ENCODE measurements at regions of chr7 and their contacts with region 1.

Region 1: GRCh38 chr7:2921653-2922347 is 77.7 kb upstream of the GNA12 start:
- DNase-seq: peak in 1 of 2 experiments; percentile 80
- H3K4me3 ChIP-seq: no peak overlapping the region
- H3K27ac ChIP-seq: no peak overlapping the region
- H3K4me1 ChIP-seq: no peaks in the 10 kb centered on the region; a peak in 1 of 7 replicates
- H3K27me3 ChIP-seq: no peaks in the 10 kb centered on the region; a peak in 1 of 7 replicates
- CTCF ChIP-seq: peak; percentile 80 to 84 (median 81)
- EP300 ChIP-seq: no peak
- POLR2A ChIP-seq: no peak
- RAD21 ChIP-seq: peak; percentile 59 to 77

Region 2: GRCh38 chr7:2863461-2864066 is 58.2 kb before region 1 on chr7:
- CTCF ChIA-PET with region 1: interaction called, 29 read pairs
- POLR2A ChIA-PET with region 1: interaction called, 4 read pairs
- DNase-seq: no peak
- H3K4me3 ChIP-seq: no peak overlapping the region
- H3K27ac ChIP-seq: 0 out of 2 replicates have a peak overlapping the region, but pooled peaks have one; percentile 2
- H3K4me1 ChIP-seq: peaks cover 0 to 9% (median 3%) of the 10 kb centered on the region in 4 experiments; a peak in 5 of 7 replicates
- H3K27me3 ChIP-seq: no peaks in the 10 kb centered on the region; a peak in 1 of 7 replicates
- CTCF ChIP-seq: no peak
- EP300 ChIP-seq: no peak
- POLR2A ChIP-seq: no peak
- RAD21 ChIP-seq: no peak

Region 3: DNA sequence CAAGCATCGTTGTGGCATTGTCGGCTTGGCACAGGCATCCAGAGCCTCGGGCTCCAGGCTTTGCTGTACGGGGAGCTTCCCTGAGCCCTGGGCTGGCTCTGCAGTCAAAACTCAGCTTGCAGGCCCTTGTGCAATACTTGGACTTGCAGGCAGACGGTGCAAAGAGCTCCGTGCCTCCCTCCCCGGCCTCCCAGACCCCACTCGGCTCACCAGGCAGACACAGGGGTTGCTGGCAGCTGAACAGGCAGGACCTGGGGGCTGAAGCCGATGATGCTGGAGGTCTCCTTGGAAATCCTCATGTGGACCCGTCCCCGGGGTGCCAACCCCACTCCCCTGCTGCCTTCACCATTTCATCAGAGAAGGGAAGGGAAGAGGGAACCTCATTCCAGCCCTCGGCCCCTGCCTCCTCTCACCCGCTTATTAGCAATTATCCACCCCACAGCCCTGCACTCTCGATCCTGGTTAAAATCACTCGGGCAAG is 18.1 kb before region 1 on chr7:
- CTCF ChIA-PET with region 1: interaction called, 29 read pairs
- POLR2A ChIA-PET with region 1: no interaction called
- DNase-seq: no peak
- H3K4me3 ChIP-seq: no peak overlapping the region
- H3K27ac ChIP-seq: no peak overlapping the region
- H3K4me1 ChIP-seq: no peaks in the 10 kb centered on the region
- H3K27me3 ChIP-seq: no peaks in the 10 kb centered on the region
- CTCF ChIP-seq: no peak
- EP300 ChIP-seq: no peak
- POLR2A ChIP-seq: no peak
- RAD21 ChIP-seq: no peak

Region 4: DNA sequence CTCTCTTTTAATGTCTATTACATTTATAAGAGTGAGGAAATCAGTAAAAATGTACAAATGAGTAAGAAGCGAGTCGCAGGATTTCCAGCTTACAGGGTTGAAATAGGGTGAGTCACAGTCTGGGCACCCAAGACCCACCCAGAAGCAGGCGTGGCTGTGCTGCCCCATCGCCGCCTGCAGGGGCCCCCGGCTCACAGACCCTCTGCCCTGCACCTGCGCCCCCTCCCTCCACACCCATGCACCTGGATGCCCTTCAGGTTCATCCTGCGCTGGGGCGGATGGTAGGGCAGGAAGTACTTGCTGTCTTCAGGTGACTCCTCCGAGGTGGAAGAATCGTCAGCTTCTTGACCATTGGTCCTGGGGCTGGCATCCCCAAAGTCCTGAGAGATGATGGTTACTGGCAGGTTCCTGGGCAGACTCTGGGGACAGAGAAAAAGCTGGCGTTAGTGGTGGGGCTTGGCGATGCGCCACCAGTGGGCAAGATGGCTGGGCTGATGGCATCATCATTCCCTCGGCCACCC is 12.5 kb after region 1 on chr7:
- CTCF ChIA-PET with region 1: interaction called, 25 read pairs
- POLR2A ChIA-PET with region 1: no interaction called
- DNase-seq: no peak
- H3K4me3 ChIP-seq: no peak overlapping the region
- H3K27ac ChIP-seq: no peak overlapping the region
- H3K4me1 ChIP-seq: peaks cover 0 to 4% (median 0%) of the 10 kb centered on the region in 4 experiments; a peak in 3 of 7 replicates
- H3K27me3 ChIP-seq: no peaks in the 10 kb centered on the region
- CTCF ChIP-seq: peak in 2 of 3 experiments; percentile 14 to 23; a peak in 2 of 4 replicates
- EP300 ChIP-seq: no peak
- POLR2A ChIP-seq: no peak
- RAD21 ChIP-seq: peak; percentile 28 to 30; a peak in 3 of 4 replicates

Region 5: DNA sequence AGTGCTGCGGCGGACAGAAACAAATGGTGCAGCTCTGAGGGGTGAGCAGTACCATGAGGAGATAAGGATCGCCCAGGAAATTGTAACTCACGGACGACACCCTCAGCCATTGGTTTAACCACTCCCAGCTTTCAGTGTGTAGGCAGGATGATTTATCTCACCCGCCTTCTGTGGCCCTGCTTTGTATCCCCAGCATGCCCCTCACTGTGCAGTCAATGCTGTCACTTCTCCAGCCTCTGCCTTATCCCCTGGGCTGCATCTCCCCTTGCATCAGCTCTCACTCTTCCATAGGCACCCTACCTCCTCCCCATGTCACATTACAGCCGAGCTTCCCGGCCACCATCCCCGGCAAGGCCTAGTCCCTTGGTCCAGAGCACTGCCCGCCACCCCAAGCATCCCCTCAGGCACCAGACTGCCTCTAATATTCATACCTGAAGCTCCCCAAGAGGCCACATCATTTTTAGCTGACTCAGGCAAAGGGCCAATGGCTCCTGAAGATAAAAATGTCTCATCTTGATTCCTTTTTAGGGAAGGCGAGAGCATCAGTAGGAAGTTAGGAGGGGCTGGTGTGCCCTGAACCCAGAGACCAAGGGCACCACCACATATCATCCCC is 44.8 kb after region 1 on chr7:
- CTCF ChIA-PET with region 1: interaction called, 15 read pairs
- POLR2A ChIA-PET with region 1: no interaction called
- DNase-seq: no peak
- H3K4me3 ChIP-seq: no peak overlapping the region
- H3K27ac ChIP-seq: no peak overlapping the region
- H3K4me1 ChIP-seq: no peaks in the 10 kb centered on the region
- H3K27me3 ChIP-seq: no peaks in the 10 kb centered on the region
- CTCF ChIP-seq: no peak
- EP300 ChIP-seq: no peak
- POLR2A ChIP-seq: no peak
- RAD21 ChIP-seq: no peak

Measured in H1 (cell line).